Activated CD4-positive, alpha-beta memory T cell treated with anti-CD3 and anti-CD28 coated beads for 36 hours (primary cell): ENCODE measurements at regions of chr12 and their contacts with region 1.

Region 1: GRCh38 chr12:27243804-27244683 is at the start of gene STK38L:
- DNase-seq: peak; percentile 98
- H3K4me3 Mint-ChIP-seq: peak within 1 kb of the TSS; percentile 100
- H3K27ac Mint-ChIP-seq: peak within 1 kb of the TSS; percentile 91
- H3K4me1 Mint-ChIP-seq: peaks cover 45% of the 10 kb centered on the region
- H3K27me3 Mint-ChIP-seq: no peaks in the 10 kb centered on the region
- total RNA-seq, gene STK38L: 25.1 to 25.2 TPM

Region 2: GRCh38 chr12:26732005-26732908 is 511.8 kb before region 1 on chr12:
- CTCF ChIA-PET with region 1: no interaction called
- POLR2A ChIA-PET with region 1: no interaction called
- intact Hi-C with region 1: no loop called
- DNase-seq: no peak
- H3K4me3 Mint-ChIP-seq: no peak overlapping the region
- H3K27ac Mint-ChIP-seq: no peak overlapping the region
- H3K4me1 Mint-ChIP-seq: peaks cover 50% of the 10 kb centered on the region
- H3K27me3 Mint-ChIP-seq: no peaks in the 10 kb centered on the region

Region 3: DNA sequence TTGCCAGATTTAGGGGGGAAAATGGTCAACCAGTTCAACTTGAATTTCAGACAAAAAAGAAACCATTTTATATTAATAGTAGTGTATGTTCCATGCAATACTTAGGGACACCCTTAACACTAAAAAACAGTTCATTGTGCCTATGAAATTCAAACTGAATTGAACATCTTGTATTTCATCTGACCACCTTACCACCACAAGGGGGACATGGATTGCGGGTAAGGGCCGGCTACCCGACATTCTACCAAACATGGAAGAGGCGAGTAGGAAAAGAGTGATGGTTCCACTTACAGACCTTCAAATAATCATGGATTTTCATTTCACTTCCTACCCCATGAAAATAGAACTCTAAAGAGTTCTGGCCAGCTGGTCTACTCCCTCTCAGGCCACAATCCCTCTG is 10.2 kb before region 1 on chr12:
- CTCF ChIA-PET with region 1: no interaction called
- POLR2A ChIA-PET with region 1: no interaction called
- intact Hi-C with region 1: no loop called
- DNase-seq: no peak
- H3K4me3 Mint-ChIP-seq: no peak overlapping the region
- H3K27ac Mint-ChIP-seq: no peak overlapping the region
- H3K4me1 Mint-ChIP-seq: peaks cover 12% of the 10 kb centered on the region
- H3K27me3 Mint-ChIP-seq: peaks cover 4% of the 10 kb centered on the region

Region 4: GRCh38 chr12:27297566-27297965 is 53.5 kb after region 1 on chr12:
- CTCF ChIA-PET with region 1: no interaction called
- POLR2A ChIA-PET with region 1: no interaction called
- intact Hi-C with region 1: loop called (anchors 1 kb)
- DNase-seq: no peak
- H3K4me3 Mint-ChIP-seq: no peak overlapping the region
- H3K27ac Mint-ChIP-seq: no peak overlapping the region
- H3K4me1 Mint-ChIP-seq: peaks cover 4% of the 10 kb centered on the region
- H3K27me3 Mint-ChIP-seq: no peaks in the 10 kb centered on the region